ENCODE measurements at regions of chrX and their contacts with region 1.

Region 1: GRCh38 chrX:11899091-11899490 is 141.1 kb downstream of the MSL3 start:
- DNase-seq: peak; percentile 71
- H3K4me3 ChIP-seq: no peak overlapping the region
- H3K27ac ChIP-seq: peak overlapping the region; percentile 69
- H3K4me1 ChIP-seq: peaks cover 10% of the 10 kb centered on the region
- H3K27me3 ChIP-seq: no peaks in the 10 kb centered on the region
- CTCF ChIP-seq: no peak
- POLR2A ChIP-seq: no peak

Region 2: DNA sequence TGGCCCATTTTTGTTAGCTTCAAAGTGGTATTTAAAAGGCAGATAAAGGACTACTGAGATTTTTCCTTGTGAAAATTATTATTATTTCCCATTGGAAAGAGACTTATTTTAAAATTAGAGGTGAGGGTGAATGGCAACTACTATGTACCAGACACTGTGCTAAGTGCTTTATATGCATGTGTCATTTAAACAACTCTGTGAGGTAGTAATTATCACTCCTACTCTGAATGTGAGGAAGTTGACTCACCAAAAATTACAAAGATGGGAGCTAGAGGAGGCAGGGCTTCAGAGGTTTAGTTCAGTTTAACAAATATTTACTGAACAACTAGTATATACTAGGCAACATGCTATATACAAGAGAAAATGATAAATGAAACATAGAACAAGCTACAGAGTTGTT is 62.8 kb before region 1 on chrX:
- CTCF ChIA-PET with region 1: interaction called, 3 read pairs
- POLR2A ChIA-PET with region 1: no interaction called
- dilution Hi-C with region 1: no loop called
- intact Hi-C with region 1: loop called (anchors 5 kb)
- DNase-seq: peak; percentile 3
- H3K4me3 ChIP-seq: no peak overlapping the region
- H3K27ac ChIP-seq: no peak overlapping the region
- H3K4me1 ChIP-seq: peaks cover 6% of the 10 kb centered on the region
- H3K27me3 ChIP-seq: no peaks in the 10 kb centered on the region
- CTCF ChIP-seq: no peak
- POLR2A ChIP-seq: no peak

Region 3: DNA sequence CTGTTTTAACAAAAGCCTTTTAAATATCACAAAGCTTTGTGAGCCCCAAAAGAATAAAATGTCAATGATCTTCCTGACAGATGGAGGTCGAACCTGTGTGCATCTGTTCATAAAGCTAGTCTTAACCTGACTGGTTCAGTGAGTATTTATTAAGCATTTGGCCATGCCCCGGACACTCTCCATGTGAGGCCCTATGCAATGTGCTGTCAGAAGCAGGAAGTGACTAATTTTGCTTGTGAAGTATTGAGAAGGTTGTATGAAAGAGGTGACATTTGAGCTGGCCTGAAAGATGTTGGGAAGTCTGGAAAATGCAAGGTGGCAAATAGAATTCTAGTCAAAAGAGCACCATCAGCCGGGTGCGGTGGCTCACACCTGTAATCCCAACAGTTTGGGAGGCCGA is 30.4 kb after region 1 on chrX:
- CTCF ChIA-PET with region 1: no interaction called
- POLR2A ChIA-PET with region 1: no interaction called
- dilution Hi-C with region 1: no loop called
- intact Hi-C with region 1: loop called (anchors 1 kb)
- DNase-seq: peak; percentile 5
- H3K4me3 ChIP-seq: no peak overlapping the region
- H3K27ac ChIP-seq: no peak overlapping the region
- H3K4me1 ChIP-seq: peaks cover 12% of the 10 kb centered on the region
- H3K27me3 ChIP-seq: no peaks in the 10 kb centered on the region
- CTCF ChIP-seq: no peak
- POLR2A ChIP-seq: no peak

Region 4: DNA sequence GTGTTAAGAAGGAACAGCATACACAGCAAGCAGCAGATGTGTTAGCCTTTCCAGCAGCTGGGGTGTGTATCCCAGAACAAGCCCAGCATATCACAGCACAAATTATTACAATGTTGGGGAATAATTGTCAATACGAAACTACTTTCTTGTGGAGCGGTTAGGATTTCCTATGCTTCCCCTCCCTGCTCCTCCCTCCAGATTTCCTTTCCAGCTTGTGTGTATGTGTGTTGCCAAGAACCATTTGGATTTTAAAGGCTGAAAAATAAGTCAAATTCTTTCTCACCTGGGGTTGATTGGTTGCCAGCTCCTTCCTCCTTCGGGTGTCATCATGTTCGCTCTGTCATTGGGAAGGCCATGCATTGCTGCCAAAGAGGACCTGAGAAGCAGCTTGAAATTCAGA is 60.9 kb after region 1 on chrX:
- CTCF ChIA-PET with region 1: no interaction called
- POLR2A ChIA-PET with region 1: no interaction called
- dilution Hi-C with region 1: no loop called
- intact Hi-C with region 1: no loop called
- DNase-seq: no peak
- H3K4me3 ChIP-seq: no peak overlapping the region
- H3K27ac ChIP-seq: no peak overlapping the region
- H3K4me1 ChIP-seq: peaks cover 4% of the 10 kb centered on the region
- H3K27me3 ChIP-seq: no peaks in the 10 kb centered on the region
- CTCF ChIP-seq: no peak
- POLR2A ChIP-seq: no peak

Region 5: GRCh38 chrX:13167481-13168231 is 1268.6 kb after region 1 on chrX:
- CTCF ChIA-PET with region 1: no interaction called
- POLR2A ChIA-PET with region 1: no interaction called
- dilution Hi-C with region 1: no loop called
- intact Hi-C with region 1: no loop called
- DNase-seq: peak; percentile 79
- H3K4me3 ChIP-seq: no peak overlapping the region
- H3K27ac ChIP-seq: peak overlapping the region; percentile 93
- H3K4me1 ChIP-seq: peaks cover 38% of the 10 kb centered on the region
- H3K27me3 ChIP-seq: no peaks in the 10 kb centered on the region
- CTCF ChIP-seq: no peak
- POLR2A ChIP-seq: no peak